Activated T-helper 2 cell treated with anti-CD3 and anti-CD28 coated beads, Interferon-gamma antibody, Interleukin-2, Interleukin-4, amounts not matched to agents 10 μg/mL and 5 μg/mL and 100 μg/mL, durations not matched to agents 14 hours and 24 hours and 36 hours (primary cell): ENCODE measurements at regions of chr11 and their contacts with region 1.

Region 1: DNA sequence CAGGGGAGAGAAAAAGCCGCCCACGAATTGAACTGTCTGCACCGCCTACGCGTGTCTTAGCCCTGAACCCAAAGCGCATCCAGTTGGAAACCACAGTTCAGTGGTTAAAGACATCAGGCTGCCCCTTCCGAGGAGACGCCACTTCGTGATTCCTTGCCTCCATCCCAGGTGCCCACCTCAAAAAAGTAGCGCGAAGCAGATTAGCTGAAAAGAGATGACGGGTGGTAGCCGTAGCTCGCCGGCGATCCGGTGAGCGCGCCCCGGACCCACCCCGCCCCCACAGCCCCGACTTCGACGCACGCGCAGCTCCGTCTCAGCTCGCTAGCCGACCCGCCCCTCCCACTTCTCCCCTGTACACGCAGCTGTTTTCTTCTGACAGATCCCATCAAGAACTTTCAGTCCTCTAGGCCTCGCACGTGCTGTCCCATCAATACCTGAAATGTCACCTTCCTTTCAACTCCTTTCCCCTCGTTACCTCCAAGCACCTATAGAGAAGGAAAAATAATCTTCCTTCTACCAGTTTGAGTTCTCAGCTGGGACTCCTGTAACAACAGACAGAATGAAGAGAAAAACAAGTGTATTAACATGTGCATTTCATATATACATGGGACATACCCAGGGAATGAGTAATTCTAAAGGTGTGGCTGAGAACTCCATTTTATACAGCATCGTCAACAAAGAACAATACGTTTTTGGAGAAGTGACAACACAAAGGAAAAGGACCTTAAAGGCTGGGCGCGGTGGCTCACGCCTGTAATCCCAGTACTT is 49.5 kb downstream of the OR4D9 start:
- DNase-seq: peak; percentile 63
- H3K4me3 Mint-ChIP-seq: peak overlapping the region; percentile 90
- H3K27ac Mint-ChIP-seq: peak overlapping the region; percentile 93
- H3K4me1 Mint-ChIP-seq: peaks cover 47% of the 10 kb centered on the region
- H3K27me3 Mint-ChIP-seq: no peaks in the 10 kb centered on the region

Region 2: DNA sequence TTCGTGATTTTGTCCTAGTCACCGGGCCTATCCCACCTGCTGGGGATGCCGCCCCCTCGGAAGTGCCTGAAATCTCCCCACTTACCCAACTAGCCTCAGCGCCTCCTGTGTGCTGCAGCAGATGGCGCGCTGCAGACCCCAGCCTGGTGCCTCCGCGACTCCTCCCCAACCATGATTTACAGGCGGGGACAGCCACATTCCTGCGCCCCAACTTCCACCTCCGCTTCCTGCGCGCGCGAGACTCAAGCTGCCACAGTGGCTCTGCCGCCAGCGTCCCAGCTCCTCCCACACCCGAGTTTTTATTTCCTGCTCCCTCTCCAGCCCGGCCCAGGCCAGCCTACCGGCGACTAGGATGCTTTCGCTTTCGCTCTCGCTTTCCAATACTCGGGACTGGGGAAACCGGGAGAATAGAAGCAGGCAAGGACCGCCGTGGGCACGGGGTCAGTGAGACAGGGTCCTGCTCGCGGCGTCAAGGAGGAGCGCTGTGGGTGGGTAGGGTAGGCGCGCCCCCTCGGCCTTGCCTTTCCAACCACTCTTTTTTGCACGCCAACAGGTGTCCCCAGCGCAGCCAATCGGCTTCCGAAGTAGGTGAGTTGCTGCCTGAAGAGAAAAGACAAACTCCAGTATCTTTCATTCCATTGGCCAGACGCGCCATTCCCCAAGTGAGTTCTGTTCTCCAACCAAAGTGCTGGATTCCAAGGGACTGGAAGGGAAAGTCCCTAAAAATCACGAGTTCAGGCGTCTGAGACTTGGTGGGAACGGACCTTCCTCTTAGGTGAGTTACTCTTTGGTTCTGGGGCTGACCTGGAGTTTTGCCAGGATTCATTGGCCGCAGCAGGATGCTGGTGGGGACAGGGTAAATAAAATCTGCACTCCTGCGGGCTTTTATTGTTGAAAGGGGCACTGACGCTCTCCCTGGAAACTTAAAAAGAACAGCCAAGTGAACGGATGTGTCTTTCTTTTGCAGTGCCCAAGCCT is 418.1 kb before region 1 on chr11 and contains the start of gene FAM111A:
- intact Hi-C with region 1: loop called (anchors 2 kb)
- DNase-seq: peak; percentile 87
- H3K4me3 Mint-ChIP-seq: peak within 1 kb of the TSS; percentile 94
- H3K27ac Mint-ChIP-seq: peak within 1 kb of the TSS; percentile 95
- H3K4me1 Mint-ChIP-seq: peaks cover 57% of the 10 kb centered on the region
- H3K27me3 Mint-ChIP-seq: no peaks in the 10 kb centered on the region
- total RNA-seq, gene FAM111A: 66.2 and 69.1 TPM in 2 replicates

Region 3: GRCh38 chr11:59401262-59401552 is 159.7 kb before region 1 on chr11:
- intact Hi-C with region 1: no loop called
- DNase-seq: no peak
- H3K4me3 Mint-ChIP-seq: no peak overlapping the region
- H3K27ac Mint-ChIP-seq: no peak overlapping the region
- H3K4me1 Mint-ChIP-seq: no peaks in the 10 kb centered on the region
- H3K27me3 Mint-ChIP-seq: no peaks in the 10 kb centered on the region

Region 4: DNA sequence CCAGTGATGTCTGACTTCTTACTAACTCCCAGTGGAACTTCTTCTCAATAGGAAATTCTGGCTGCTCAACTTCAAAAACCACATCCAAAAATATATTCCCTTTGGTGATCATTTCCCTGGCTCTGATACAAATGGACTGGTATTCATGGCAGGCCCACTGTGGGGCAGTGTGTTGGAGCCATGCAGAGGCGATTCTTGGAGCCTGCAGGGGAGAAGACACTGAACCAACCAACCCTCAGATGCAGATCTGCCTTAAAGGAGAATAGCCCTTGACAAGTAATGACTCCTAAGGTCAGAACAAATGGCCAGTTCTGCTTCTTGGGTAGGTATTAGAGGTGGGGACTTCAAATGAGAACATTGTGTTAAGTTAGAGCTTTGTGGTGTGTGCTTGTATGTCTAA is 37.3 kb before region 1 on chr11:
- intact Hi-C with region 1: no loop called
- DNase-seq: no peak
- H3K4me3 Mint-ChIP-seq: no peak overlapping the region
- H3K27ac Mint-ChIP-seq: no peak overlapping the region
- H3K4me1 Mint-ChIP-seq: no peaks in the 10 kb centered on the region
- H3K27me3 Mint-ChIP-seq: peaks cover 18% of the 10 kb centered on the region

Region 5: DNA sequence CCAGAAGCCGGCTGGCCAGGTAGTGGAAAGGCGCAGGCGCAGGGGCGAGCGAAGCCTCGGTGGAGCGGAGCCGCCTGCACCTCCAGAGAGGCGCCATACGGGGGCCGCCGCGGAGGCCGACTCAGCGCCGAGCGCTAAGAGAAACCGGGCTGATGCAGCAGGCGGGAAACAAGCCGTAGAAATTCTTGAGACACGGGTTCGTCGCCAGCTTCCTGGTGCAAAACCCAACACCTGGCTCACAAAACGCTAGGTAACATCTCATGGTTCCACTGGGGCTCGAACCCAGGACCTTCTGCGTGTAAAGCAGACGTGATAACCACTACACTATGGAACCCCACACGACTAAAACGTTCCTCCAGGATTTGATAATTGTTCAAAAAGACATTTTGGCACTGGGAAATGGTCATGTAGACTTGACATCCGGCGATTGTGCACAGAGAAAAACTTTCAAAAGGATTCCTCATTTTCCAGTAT is 10.5 kb before region 1 on chr11:
- intact Hi-C with region 1: loop called (anchors 1 kb)
- DNase-seq: peak; percentile 84
- H3K4me3 Mint-ChIP-seq: peak overlapping the region; percentile 89
- H3K27ac Mint-ChIP-seq: peak overlapping the region; percentile 94
- H3K4me1 Mint-ChIP-seq: peaks cover 24% of the 10 kb centered on the region
- H3K27me3 Mint-ChIP-seq: peaks cover 4% of the 10 kb centered on the region

Region 6: DNA sequence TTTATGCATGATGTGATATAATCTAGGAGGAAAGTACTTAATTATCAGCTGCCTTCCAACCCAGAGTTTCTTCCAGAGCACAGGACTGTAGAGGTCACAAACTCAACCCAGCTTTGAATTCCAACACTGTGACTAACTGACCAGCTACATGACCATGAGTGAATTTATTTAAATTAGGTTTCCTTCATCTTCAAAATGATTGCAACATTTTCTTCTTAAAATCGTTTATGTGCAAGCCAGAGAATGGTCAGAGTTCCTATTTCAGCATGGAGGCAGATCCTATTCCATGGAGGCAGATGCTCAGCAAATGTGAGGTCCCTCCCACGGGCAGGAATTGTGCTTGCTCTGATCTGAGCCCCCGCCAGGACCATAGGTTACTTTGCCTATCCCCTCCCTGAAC is 12.3 kb after region 1 on chr11:
- intact Hi-C with region 1: no loop called
- DNase-seq: no peak
- H3K4me3 Mint-ChIP-seq: no peak overlapping the region
- H3K27ac Mint-ChIP-seq: no peak overlapping the region
- H3K4me1 Mint-ChIP-seq: no peaks in the 10 kb centered on the region
- H3K27me3 Mint-ChIP-seq: no peaks in the 10 kb centered on the region

Region 7: GRCh38 chr11:59706518-59707285 is 145.8 kb after region 1 on chr11:
- intact Hi-C with region 1: no loop called
- DNase-seq: no peak
- H3K4me3 Mint-ChIP-seq: no peak overlapping the region
- H3K27ac Mint-ChIP-seq: no peak overlapping the region
- H3K4me1 Mint-ChIP-seq: no peaks in the 10 kb centered on the region
- H3K27me3 Mint-ChIP-seq: peaks cover 8% of the 10 kb centered on the region

Region 8: DNA sequence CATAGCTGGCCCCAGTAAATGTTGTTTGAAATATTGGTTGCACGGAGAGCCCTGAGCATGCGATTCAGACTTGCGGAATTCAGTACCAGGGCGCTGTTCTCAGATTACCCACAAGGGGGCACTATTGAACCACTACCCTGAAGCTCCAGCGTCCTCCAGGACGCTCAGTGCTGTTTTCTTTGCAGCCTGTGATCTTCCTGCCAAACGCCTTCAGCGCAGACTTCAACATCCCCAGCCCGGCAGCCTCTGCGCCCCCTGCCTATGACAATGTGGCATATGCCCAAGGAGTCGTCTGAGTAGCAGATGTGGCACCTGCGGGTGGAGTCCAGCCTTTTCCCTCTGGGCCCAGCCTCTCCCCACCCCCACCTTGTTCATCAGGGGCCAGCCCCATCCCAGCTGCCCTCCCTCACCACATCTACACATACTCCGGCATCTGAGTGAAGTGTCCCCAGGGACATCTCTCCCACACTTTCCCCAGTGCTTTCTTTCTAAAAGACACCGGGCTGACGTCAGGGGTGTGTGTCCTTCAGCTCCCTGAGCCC is 1214.6 kb after region 1 on chr11:
- intact Hi-C with region 1: loop called (anchors 5 kb)
- DNase-seq: peak; percentile 76
- H3K4me3 Mint-ChIP-seq: no peak overlapping the region
- H3K27ac Mint-ChIP-seq: no peak overlapping the region
- H3K4me1 Mint-ChIP-seq: peaks cover 3% of the 10 kb centered on the region
- H3K27me3 Mint-ChIP-seq: peaks cover 20% of the 10 kb centered on the region